ENCODE measurements at regions of chr19 and their contacts with region 1.

Region 1: DNA sequence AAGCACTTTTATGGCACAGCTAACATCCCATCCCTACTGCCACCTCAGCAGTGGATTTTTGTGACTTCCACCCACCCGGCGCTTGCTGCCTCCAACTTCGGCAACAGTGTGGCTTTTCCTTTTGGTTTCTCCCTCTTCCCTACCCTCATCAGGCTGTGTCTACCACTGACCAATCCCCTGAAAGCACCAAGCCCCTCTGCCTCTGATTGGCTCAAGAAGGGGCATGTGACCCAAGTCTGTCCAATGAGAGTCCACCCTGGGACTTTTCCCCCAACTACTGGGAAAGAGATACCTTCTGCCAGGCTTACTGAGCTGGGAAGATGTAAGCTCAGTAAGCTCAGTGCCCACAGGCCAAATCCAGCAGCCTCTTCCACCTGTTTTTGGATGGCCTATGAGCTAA is 5.8 kb downstream of the SMIM7 start:
- DNase-seq: no peak
- ATAC-seq: peak; percentile 31
- H3K4me3 Mint-ChIP-seq: no peak overlapping the region
- H3K27ac Mint-ChIP-seq: no peak overlapping the region
- H3K4me1 Mint-ChIP-seq: peaks cover 30% of the 10 kb centered on the region
- H3K27me3 Mint-ChIP-seq: no peaks in the 10 kb centered on the region
- CTCF ChIP-seq: no peak

Region 2: GRCh38 chr19:16548956-16549355 is 105.2 kb before region 1 on chr19:
- CTCF ChIA-PET with region 1: no interaction called
- POLR2A ChIA-PET with region 1: interaction called, 16 read pairs
- intact Hi-C with region 1: no loop called
- DNase-seq: no peak
- ATAC-seq: no peak
- H3K4me3 Mint-ChIP-seq: no peak overlapping the region
- H3K27ac Mint-ChIP-seq: no peak overlapping the region
- H3K4me1 Mint-ChIP-seq: peaks cover 14% of the 10 kb centered on the region
- H3K27me3 Mint-ChIP-seq: no peaks in the 10 kb centered on the region
- CTCF ChIP-seq: no peak

Measured in activated B cell treated with CpG ODN at 0.5 μM for 24 hours (primary cell).